Ascending aorta (tissue), 2 donors: ENCODE measurements at regions of chr1 and their contacts with region 1.

Region 1: GRCh38 chr1:9101510-9102146 is 27.3 kb downstream of the GPR157 start:
- DNase-seq: no peak
- H3K4me3 ChIP-seq: no peak overlapping the region
- H3K27ac ChIP-seq: no peak overlapping the region
- H3K4me1 ChIP-seq: no peaks in the 10 kb centered on the region
- H3K27me3 ChIP-seq: no peaks in the 10 kb centered on the region
- CTCF ChIP-seq: peak in 2 of 3 experiments; percentile 33 to 52

Region 2: GRCh38 chr1:8698012-8698630 is 403.5 kb before region 1 on chr1:
- intact Hi-C with region 1: no loop called
- DNase-seq: no peak
- H3K4me3 ChIP-seq: no peak overlapping the region
- H3K27ac ChIP-seq: no peak overlapping the region
- H3K4me1 ChIP-seq: peaks cover 0 to 4% of the 10 kb centered on the region in 2 donors
- H3K27me3 ChIP-seq: no peaks in the 10 kb centered on the region
- CTCF ChIP-seq: no peak

Region 3: DNA sequence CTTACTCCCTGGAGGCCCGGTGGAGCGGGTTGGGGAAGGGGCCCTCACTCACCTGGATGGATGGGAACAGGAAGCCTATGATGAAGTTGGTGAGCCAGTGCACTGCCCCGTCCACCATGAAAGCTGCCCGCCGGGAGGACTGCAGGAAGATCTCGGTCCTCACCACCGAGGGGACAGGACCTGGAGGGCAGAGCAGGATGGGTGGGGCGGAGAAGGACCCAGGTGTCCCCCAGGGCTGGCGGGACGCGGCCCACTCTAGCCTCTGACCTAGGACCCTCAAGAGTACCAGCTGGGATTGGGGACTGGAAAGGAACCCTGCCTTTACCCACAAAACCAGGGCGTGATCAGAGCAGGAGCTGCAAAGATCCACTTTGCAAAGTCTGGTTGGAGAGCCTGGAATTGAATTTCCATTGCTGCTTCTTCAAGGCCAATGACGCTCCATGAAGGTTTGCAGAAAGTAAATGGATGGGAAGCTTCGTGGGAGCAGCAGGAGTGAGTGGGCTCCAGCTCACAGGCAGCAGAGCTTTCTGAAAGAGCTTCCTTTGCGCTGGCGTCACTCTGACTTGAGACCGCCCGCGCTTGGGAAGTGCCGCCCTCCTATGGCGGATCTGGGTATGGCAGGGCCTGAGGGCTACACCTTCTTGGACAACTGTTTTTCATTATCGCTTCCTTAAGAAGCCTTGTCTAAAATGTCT is 96.8 kb before region 1 on chr1:
- intact Hi-C with region 1: loop called (anchors 5 kb)
- DNase-seq: peak in 1 of 2 donors; percentile 84
- H3K4me3 ChIP-seq: no peak overlapping the region
- H3K27ac ChIP-seq: no peak overlapping the region
- H3K4me1 ChIP-seq: peaks cover 0 to 6% of the 10 kb centered on the region in 2 donors
- H3K27me3 ChIP-seq: no peaks in the 10 kb centered on the region
- CTCF ChIP-seq: peak; percentile 78 to 97 (median 95)